A549 (cell line): ENCODE measurements at regions of chr16 and their contacts with region 1.

Region 1: DNA sequence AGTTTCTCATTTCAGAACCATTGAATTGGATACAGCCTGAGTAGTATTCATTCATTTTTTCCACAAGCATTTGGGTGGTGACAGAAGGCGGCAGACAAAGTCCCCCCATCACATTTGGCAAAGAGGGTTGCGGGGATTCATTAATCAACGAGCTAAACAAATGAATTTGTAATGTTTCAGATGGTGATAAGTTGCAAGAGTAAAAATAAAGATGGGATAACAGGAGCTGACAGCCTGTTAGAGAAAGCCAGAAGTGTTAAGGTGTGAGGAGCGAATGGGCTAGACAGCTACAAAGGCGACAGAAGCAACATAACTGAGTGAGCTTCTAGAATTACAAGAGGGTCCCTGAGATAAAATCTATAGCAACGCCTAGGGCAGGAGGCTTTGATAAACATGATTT is 342.8 kb upstream of the HSBP1 start:
- DNase-seq: no peak
- ATAC-seq: no peak
- H3K4me3 ChIP-seq: no peak overlapping the region
- H3K27ac ChIP-seq: no peak overlapping the region
- H3K4me1 ChIP-seq: no peaks in the 10 kb centered on the region
- CTCF ChIP-seq: no peak
- EP300 ChIP-seq: no peak
- POLR2A ChIP-seq: no peak
- RAD21 ChIP-seq: no peak

Region 2: GRCh38 chr16:83447560-83447959 is 17.4 kb before region 1 on chr16:
- CTCF ChIA-PET with region 1: interaction called, 15 read pairs
- POLR2A ChIA-PET with region 1: no interaction called
- DNase-seq: no peak
- ATAC-seq: no peak
- H3K4me3 ChIP-seq: no peak overlapping the region
- H3K27ac ChIP-seq: no peak overlapping the region
- H3K4me1 ChIP-seq: no peaks in the 10 kb centered on the region
- CTCF ChIP-seq: no peak
- EP300 ChIP-seq: no peak
- POLR2A ChIP-seq: no peak
- RAD21 ChIP-seq: no peak

Region 3: DNA sequence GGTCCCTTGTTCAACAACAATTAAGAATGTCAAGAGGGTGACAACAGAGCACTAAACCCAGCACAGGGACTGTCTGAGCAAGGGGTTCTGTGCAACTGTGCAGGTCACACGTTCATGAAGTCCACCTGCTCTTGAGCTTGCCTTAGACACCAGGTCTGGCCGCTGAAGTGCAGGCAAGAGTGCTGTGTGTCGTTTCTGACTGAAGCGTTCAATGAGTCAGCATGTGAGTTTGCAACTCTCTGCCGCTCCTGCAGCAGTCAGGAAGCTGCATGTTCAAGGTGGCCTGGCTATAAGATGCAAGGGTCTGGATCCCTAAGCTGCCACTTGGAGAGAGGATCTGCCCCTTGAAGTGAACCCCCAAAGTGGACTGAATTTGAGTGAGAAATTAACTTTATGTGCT is 10.1 kb after region 1 on chr16:
- CTCF ChIA-PET with region 1: no interaction called
- POLR2A ChIA-PET with region 1: no interaction called
- DNase-seq: no peak
- ATAC-seq: no peak
- H3K4me3 ChIP-seq: no peak overlapping the region
- H3K27ac ChIP-seq: no peak overlapping the region
- H3K4me1 ChIP-seq: no peaks in the 10 kb centered on the region
- CTCF ChIP-seq: no peak
- EP300 ChIP-seq: no peak
- POLR2A ChIP-seq: no peak
- RAD21 ChIP-seq: no peak

Region 4: DNA sequence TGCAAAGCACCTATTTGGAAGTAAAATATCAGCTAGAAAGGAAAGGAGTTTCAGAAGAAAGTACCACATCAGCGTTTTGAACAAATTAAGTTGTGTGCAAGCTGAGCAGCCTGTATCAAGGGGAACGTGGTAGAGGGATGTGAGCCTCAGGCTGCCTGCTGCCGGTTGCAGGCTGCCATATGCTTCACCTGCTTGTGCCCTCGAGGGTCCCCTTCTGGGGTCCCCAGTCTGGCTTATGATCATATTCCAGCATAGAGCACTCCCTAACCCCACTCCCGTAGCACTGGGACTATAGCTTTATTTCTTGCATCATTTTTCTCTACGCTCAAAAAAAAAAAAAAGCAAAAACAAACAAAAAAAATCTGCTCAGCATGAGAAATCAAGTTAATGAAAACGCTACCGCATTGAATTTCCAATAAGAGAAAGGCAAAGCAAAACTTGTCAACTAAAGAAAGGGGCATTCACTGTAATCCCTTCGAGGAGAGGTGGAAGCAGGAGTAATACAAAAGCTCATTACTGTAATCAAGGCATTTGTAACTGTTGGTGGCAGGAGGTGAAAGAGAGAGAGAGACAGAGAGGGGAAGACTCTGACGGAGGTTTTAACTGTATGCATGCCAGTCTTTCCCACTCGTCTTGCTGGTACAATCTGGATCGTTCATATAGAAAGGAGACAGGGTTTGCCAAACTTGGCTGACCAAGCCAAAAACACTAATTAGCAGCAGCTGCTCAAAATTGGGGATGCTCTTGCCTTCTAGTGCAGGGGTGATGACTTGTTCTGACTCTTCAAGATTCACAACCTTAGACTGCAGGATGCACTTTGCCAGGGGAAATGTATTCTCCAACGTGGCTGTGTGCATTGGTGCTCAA is 84.6 kb after region 1 on chr16:
- CTCF ChIA-PET with region 1: no interaction called
- POLR2A ChIA-PET with region 1: no interaction called
- DNase-seq: no peak
- ATAC-seq: no peak
- H3K4me3 ChIP-seq: no peak overlapping the region
- H3K27ac ChIP-seq: no peak overlapping the region
- H3K4me1 ChIP-seq: no peaks in the 10 kb centered on the region
- CTCF ChIP-seq: no peak
- EP300 ChIP-seq: no peak
- POLR2A ChIP-seq: no peak
- RAD21 ChIP-seq: no peak